Right cardiac atrium (tissue), 5 donors: ENCODE measurements at regions of chr3 and their contacts with region 1.

Region 1: DNA sequence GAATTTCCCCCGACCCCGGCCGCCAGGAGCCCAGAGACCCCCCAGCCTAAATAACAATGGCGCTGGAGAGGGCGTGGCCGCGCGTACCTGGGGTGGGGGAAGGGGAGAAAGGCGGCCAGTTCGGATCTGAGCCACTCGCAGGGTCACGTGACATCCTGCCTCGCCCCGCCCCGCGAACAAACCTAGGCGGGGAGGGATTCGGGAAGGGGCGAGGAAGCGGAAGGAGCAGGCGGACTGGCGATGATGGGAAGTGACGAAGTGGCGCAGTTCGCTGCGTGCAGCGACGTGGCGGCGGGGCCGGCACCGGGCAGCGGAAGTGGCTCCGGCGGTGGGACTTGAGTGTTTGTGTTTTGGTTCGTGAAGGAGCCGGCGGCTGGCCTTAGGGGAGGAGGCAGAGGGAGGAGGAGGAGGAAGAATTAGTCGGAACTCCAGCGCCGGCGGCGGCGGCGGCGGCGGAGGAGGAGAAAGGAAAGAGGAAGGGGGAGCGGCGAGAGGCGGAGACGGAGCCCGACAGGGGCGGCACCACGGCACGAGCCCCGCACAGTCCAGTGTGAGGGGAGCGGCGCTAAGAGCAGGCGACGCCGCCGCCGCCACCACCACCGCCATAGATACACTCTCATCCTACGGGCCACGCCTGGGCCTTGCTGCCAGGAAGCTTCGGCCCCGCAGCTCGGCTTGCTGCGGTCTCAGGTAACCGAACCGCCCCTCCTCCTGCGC is at the start of gene RAB5A:
- DNase-seq: peak; percentile 98 to 99 (median 99)
- ATAC-seq: peak; percentile 99
- H3K4me3 ChIP-seq: peak within 1 kb of the TSS; percentile 84
- H3K27ac ChIP-seq: peak within 1 kb of the TSS; percentile 92
- H3K4me1 ChIP-seq: no peaks in the 10 kb centered on the region
- H3K27me3 ChIP-seq: no peaks in the 10 kb centered on the region
- total RNA-seq, gene RAB5A: 45.2 to 71.3 (median 47.9) TPM

Region 2: DNA sequence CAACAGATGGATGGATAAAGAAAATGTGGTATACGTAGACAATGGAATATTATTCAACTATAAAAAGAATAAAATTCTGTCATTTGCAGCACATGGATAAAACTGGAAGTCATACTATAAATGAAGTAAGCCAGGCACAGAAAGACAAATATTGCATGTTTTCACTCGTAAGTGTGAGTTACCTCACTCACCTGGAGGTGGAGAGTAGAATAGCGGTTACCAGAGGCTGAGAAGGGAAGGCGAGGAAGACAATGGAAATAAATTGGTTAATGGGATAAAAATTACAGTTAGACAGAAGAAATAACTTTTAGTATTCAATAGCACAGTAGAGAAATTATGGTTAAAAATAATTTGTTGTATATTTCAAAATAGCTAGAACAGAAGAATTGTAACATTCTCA is 154.6 kb before region 1 on chr3:
- intact Hi-C with region 1: no loop called
- DNase-seq: no peak
- ATAC-seq: no peak
- H3K4me3 ChIP-seq: no peak overlapping the region
- H3K27ac ChIP-seq: no peak overlapping the region
- H3K4me1 ChIP-seq: no peaks in the 10 kb centered on the region
- H3K27me3 ChIP-seq: no peaks in the 10 kb centered on the region

Region 3: DNA sequence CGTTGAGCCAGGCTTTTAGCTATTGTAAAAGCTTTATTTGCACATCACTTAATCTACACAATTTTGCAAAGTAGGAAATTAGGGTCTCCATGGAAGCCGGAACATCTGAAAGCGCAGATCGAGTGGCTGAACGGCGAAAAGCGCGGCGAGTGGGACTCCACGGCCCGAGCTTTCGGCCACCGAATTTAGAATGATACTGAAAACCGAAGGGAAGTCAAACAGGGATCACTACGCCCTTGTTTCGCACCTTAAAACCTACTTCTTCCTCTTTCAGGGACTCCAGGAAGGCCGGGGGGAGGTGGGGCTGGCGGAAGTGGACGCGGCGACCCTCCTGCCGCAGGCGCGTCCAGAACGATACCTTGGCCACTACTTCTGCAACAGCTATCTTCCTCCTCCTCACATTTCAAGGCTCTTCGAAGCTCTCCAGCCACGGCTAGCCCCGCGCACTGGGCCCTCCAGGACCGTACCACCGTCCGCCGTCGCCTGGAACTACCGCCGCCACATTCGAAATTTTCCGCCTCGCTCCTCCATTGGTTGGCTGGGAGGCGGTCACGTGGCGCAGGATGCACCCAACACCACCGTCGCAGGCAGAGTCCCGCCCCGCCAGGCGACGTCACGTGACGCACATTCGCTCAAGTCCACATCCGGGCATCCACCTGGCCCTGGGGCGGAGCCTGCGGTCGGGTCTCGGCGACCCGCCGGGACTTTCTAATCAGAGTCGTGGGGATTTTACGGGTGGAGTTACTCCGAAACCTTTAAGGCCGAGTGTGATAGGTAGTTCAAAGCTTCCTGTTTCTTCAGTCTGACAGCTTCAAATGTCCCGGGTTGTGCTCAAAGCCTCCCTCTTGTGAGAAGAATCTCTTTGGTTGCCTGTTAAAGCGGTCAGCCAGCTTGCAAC is 239.0 kb after region 1 on chr3 and contains the start of gene SGO1:
- intact Hi-C with region 1: loop called in 2 of 4 experiments (anchors 10 kb)
- DNase-seq: peak; percentile 99 to 100 (median 100)
- ATAC-seq: peak; percentile 100
- H3K4me3 ChIP-seq: peak within 1 kb of the TSS; percentile 62
- H3K27ac ChIP-seq: peak within 1 kb of the TSS; percentile 81
- H3K4me1 ChIP-seq: no peaks in the 10 kb centered on the region
- H3K27me3 ChIP-seq: no peaks in the 10 kb centered on the region
- total RNA-seq, gene SGO1: 0.20 to 0.43 (median 0.24) TPM